Aorta (tissue), 5 donors: ENCODE measurements at regions of chr20 and their contacts with region 1.

Region 1: GRCh38 chr20:63657937-63658748 is at the start of gene RTEL1:
- DNase-seq: peak; percentile 96 to 97
- ATAC-seq: peak; percentile 96
- H3K4me3 ChIP-seq: peak within 1 kb of the TSS; percentile 28 to 32
- H3K27ac ChIP-seq: peak within 1 kb of the TSS; percentile 9 to 85
- H3K4me1 ChIP-seq: no peaks in the 10 kb centered on the region
- H3K27me3 ChIP-seq: no peaks in the 10 kb centered on the region
- total RNA-seq, gene RTEL1: 35.5 to 43.0 TPM

Region 2: GRCh38 chr20:63681599-63682159 is 23.5 kb after region 1 on chr20:
- intact Hi-C with region 1: loop called in 1 of 2 experiments (anchors 1 kb)
- DNase-seq: no peak
- ATAC-seq: no peak
- H3K4me3 ChIP-seq: no peak overlapping the region
- H3K27ac ChIP-seq: peak overlapping the region in 1 of 2 donors; percentile 76
- H3K4me1 ChIP-seq: no peaks in the 10 kb centered on the region
- H3K27me3 ChIP-seq: no peaks in the 10 kb centered on the region

Region 3: GRCh38 chr20:63707549-63708300 is 49.6 kb after region 1 on chr20 and contains the starts of genes ARFRP1 and ZGPAT:
- intact Hi-C with region 1: loop called in 1 of 2 experiments (anchors 1 kb)
- DNase-seq: peak; percentile 94 to 97
- ATAC-seq: peak; percentile 95
- H3K4me3 ChIP-seq: peak within 1 kb of the TSS; percentile 93 to 96
- H3K27ac ChIP-seq: peak within 1 kb of the TSS; percentile 6 to 84
- H3K4me1 ChIP-seq: no peaks in the 10 kb centered on the region
- H3K27me3 ChIP-seq: no peaks in the 10 kb centered on the region
- total RNA-seq, gene ARFRP1: 46.3 to 51.7 TPM
- total RNA-seq, gene ZGPAT: 20.8 to 28.6 TPM